ENCODE measurements at regions of chr5 and their contacts with region 1.

Region 1: DNA sequence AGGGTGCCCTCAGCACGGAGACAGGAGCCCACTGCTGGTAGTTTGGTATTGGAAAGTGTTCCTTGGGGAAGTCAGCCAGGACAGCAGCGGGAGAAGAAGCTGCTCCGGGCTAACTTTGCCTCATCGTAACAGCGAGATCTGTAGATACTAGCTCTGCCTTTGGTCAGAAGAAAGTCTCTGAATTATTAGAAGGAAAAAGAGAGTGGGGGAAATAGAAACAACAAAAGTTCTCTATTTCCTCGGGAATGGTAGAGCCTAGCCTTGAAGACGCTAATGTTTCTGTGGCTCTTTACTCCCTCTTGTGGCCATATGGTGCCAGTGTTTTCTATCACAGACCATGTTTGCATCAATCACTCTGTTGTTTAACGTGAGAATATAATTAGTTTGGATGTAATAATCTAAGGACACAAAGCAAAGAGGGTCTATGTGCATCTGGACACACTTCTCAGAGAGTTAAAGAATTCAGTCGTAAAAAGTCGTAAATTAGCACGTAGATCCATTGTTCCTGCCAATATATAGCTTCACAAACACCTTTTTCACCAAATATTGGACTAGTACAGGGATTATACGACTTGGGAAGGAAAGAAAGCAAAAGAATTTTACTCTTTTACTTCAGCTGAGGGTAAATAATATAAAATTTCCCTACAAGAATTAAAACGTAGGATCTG is 40.2 kb upstream of the HSD17B4 start:
- DNase-seq: peak; percentile 66
- ATAC-seq: peak; percentile 78
- H3K4me3 Mint-ChIP-seq: peak overlapping the region; percentile 78
- H3K27ac Mint-ChIP-seq: peak overlapping the region; percentile 93
- H3K4me1 Mint-ChIP-seq: peaks cover 35% of the 10 kb centered on the region
- H3K27me3 Mint-ChIP-seq: no peaks in the 10 kb centered on the region

Region 2: GRCh38 chr5:119022017-119022745 is 389.9 kb before region 1 on chr5:
- CTCF ChIA-PET with region 1: interaction called, 10 read pairs
- POLR2A ChIA-PET with region 1: no interaction called
- intact Hi-C with region 1: loop called (anchors 1 kb)
- DNase-seq: no peak
- ATAC-seq: peak; percentile 70
- H3K4me3 Mint-ChIP-seq: no peak overlapping the region
- H3K27ac Mint-ChIP-seq: no peak overlapping the region
- H3K4me1 Mint-ChIP-seq: peaks cover 2% of the 10 kb centered on the region
- H3K27me3 Mint-ChIP-seq: no peaks in the 10 kb centered on the region

Region 3: DNA sequence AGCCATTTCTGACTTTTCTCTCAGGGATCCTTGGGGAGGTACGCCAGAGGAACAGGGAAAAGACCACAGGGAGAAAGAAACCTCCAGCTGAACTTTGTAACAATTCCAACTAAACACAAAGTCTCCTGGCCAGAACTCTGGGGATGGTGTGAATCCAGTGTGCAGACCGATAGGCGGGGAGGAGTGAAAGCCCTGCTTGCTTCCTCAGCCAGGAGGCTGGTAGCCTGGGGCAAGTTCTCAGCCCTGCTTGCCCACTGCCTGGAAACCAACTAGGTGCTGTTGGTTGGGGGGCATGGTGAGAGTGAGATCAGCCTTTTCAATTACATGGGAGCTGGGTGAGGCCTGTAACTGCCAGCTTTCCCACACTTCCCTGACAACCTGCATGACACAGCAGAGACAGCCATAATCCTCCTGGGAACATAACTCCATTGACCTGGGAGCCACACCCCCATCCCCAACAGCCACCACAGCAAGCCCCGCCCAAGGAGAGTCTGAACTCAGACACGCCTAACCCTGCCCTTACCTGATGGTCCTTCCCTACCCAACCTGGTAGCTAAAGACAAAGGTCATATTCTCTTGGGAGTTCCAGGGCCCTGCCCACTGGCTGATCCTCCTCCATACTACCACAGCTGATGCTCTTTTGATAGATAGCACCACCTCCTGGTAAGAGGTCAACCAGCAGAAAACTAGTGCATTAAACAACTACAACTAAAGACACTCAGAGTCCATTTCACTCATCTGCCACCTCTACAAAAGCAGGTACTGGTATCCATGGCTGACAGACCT is 156.3 kb before region 1 on chr5:
- CTCF ChIA-PET with region 1: interaction called, 12 read pairs
- POLR2A ChIA-PET with region 1: no interaction called
- intact Hi-C with region 1: no loop called
- DNase-seq: peak; percentile 22
- ATAC-seq: peak; percentile 56
- H3K4me3 Mint-ChIP-seq: no peak overlapping the region
- H3K27ac Mint-ChIP-seq: no peak overlapping the region
- H3K4me1 Mint-ChIP-seq: peaks cover 12% of the 10 kb centered on the region
- H3K27me3 Mint-ChIP-seq: no peaks in the 10 kb centered on the region

Region 4: DNA sequence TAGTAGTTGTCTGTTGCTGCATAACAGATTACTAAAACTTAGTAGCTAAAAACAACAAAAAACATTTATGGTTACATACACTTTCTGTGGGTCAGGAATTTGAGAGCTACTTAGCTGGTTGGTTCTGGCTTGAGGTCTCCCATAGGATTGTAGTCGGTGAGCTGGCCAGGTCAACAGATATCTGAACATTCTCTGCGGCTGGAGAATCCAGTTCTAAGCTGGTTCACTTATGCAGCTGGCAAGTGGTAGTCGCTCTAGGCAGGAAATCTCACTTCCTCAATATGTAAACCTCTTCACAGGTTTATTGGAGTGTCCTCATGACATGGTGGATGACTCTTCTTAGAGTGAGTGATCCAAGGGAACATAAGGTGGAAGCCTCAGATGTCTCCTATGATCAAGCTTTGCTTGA is 121.9 kb before region 1 on chr5:
- CTCF ChIA-PET with region 1: interaction called, 12 read pairs
- POLR2A ChIA-PET with region 1: no interaction called
- intact Hi-C with region 1: no loop called
- DNase-seq: no peak
- ATAC-seq: peak; percentile 55
- H3K4me3 Mint-ChIP-seq: peak overlapping the region; percentile 0
- H3K27ac Mint-ChIP-seq: peak overlapping the region; percentile 93
- H3K4me1 Mint-ChIP-seq: peaks cover 84% of the 10 kb centered on the region
- H3K27me3 Mint-ChIP-seq: no peaks in the 10 kb centered on the region

Region 5: DNA sequence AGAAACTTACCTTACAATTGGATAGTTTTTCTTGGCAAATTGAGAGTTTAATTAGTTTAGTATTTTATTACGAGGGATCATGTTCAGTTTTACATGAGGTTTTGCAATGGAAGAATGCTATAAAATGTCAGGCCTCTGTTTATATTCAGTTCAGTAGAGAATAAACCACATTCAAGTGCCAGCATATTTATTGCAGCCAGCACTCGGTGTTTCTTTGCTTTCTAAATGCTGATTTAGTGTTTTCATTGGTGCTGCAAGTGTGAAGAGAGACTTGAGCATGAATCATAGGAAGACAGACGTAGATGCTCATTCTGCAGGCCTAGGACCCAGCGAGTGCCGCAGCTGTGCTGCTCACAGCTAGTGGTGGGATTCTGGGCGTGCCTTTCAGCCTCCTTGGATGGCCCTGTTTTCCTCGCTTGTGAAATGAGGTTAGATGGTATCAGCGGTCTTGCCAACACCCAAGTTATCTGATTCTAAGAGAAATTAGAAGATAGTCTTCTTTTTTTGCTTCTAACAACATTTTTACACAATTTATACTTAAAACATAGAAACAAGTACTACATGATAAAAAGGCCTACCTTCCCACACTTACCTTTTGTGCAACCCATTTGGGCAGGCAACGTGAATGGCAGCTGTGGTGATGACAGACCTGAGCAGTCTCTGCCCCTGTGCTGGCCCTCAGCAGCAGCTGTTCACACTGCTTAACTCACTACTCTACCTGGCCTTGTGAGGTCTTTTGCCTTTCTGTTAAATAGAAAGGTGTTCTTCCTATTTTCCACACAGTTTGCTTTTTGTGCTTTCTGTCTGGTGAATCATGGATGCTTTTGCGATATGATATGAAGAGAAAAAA is 83.1 kb before region 1 on chr5:
- CTCF ChIA-PET with region 1: interaction called, 11 read pairs
- POLR2A ChIA-PET with region 1: no interaction called
- intact Hi-C with region 1: no loop called
- DNase-seq: peak; percentile 80
- ATAC-seq: peak; percentile 58
- H3K4me3 Mint-ChIP-seq: peak overlapping the region; percentile 45
- H3K27ac Mint-ChIP-seq: peak overlapping the region; percentile 98
- H3K4me1 Mint-ChIP-seq: peaks cover 96% of the 10 kb centered on the region
- H3K27me3 Mint-ChIP-seq: no peaks in the 10 kb centered on the region

Region 6: DNA sequence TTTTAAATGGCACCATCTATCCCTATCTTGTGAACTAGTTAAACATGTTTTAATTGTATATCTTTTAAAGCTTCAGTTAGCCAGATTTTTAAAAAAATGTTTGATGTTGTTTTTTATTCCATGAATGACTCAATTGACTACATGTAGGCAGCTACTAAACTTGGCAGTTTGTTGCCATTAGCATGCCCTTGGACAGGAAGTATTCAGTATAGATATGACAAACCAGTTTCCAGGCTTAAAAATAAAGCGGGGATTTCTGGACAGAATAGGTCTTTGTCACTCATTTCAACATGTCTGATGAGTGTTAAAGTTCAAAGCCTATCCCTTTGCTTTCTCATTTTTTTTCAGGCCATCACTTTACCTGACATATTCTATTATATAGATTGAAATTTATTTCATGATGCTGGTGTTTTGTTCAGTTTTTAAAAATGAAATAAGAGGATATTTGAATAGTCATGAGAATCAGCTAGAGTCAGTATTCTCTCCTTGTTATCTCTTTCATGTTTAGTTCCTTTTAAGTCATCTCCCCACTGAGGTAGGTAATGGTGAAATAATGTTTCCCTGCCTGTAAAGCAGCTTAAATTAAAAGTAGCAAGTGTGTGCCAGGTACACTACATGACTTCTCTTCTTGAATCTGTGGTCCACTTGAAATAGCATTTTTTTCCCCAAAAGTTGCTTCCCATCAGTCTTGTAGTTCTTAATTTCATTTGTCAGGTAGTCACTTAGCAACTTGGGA is 44.4 kb before region 1 on chr5:
- CTCF ChIA-PET with region 1: interaction called, 53 read pairs
- POLR2A ChIA-PET with region 1: interaction called, 3 read pairs
- intact Hi-C with region 1: loop called in 1 of 2 experiments (anchors 1 kb)
- DNase-seq: peak; percentile 25
- ATAC-seq: peak; percentile 69
- H3K4me3 Mint-ChIP-seq: peak overlapping the region; percentile 57
- H3K27ac Mint-ChIP-seq: peak overlapping the region; percentile 95
- H3K4me1 Mint-ChIP-seq: peaks cover 89% of the 10 kb centered on the region
- H3K27me3 Mint-ChIP-seq: no peaks in the 10 kb centered on the region

Region 7: GRCh38 chr5:119397518-119398380 is 14.3 kb before region 1 on chr5:
- CTCF ChIA-PET with region 1: interaction called, 58 read pairs
- POLR2A ChIA-PET with region 1: interaction called, 3 read pairs
- intact Hi-C with region 1: loop called in 1 of 2 experiments (anchors 1 kb)
- DNase-seq: peak; percentile 43
- ATAC-seq: peak; percentile 70
- H3K4me3 Mint-ChIP-seq: peak overlapping the region; percentile 56
- H3K27ac Mint-ChIP-seq: peak overlapping the region; percentile 88
- H3K4me1 Mint-ChIP-seq: peaks cover 88% of the 10 kb centered on the region
- H3K27me3 Mint-ChIP-seq: no peaks in the 10 kb centered on the region

Region 8: GRCh38 chr5:119597728-119598298 is 185.7 kb after region 1 on chr5:
- CTCF ChIA-PET with region 1: no interaction called
- POLR2A ChIA-PET with region 1: no interaction called
- intact Hi-C with region 1: no loop called
- DNase-seq: no peak
- ATAC-seq: no peak
- H3K4me3 Mint-ChIP-seq: no peak overlapping the region
- H3K27ac Mint-ChIP-seq: no peak overlapping the region
- H3K4me1 Mint-ChIP-seq: no peaks in the 10 kb centered on the region
- H3K27me3 Mint-ChIP-seq: no peaks in the 10 kb centered on the region

Measured in activated CD4-positive, alpha-beta T cell treated with anti-CD3 and anti-CD28 coated beads for 36 hours (primary cell).